ENCODE measurements at regions of chr10 and their contacts with region 1.

Region 1: DNA sequence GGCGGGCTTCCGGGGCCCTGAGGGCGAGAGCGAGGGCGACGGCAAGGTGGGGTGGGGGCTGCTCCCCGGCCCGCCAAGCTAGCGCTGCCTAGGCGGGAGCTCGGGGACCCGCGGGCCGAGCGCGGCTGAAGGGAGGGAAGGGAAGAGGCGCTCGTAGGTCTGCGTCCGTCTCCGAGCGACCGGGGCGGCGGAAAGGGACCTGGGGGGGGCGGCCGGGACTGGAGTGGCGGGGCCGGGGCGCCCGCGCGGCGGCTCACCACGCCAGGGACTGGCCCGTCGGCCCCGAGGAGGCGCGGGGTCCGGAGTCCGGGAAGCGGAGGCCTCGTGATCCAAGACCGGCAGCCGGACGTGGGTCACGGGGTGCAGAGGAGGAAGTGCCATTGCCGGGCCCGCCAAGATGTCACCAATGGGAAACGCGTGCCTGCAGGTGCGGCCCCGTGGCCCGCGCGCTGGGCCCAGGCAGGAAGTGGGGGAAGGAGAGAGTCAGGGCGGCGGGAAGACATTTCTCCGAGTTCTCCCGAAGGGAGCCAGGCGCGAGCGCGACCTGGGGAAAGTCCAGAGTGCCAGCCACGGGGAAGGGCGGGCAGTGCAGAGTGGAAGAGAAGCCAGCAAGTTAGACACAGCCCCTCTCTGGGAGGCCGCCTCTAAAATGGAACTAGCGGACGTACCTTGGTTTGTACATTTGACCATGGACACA is 11.9 kb downstream of the HNRNPF start:
- DNase-seq: peak in 2 of 4 experiments; percentile 91 to 95
- ATAC-seq: peak; percentile 74
- H3K4me3 ChIP-seq: peak overlapping the region; percentile 65
- H3K27ac ChIP-seq: peak overlapping the region; percentile 96
- H3K4me1 ChIP-seq: peaks cover 46 to 58% of the 10 kb centered on the region in 2 experiments
- H3K27me3 ChIP-seq: no peaks in the 10 kb centered on the region
- CTCF ChIP-seq: no peak
- EP300 ChIP-seq: 0 out of 2 replicates have a peak, but pooled peaks have one; percentile 13
- POLR2A ChIP-seq: peak; percentile 91
- RAD21 ChIP-seq: peak in 1 of 2 experiments; percentile 19; a peak in 3 of 4 replicates

Region 2: DNA sequence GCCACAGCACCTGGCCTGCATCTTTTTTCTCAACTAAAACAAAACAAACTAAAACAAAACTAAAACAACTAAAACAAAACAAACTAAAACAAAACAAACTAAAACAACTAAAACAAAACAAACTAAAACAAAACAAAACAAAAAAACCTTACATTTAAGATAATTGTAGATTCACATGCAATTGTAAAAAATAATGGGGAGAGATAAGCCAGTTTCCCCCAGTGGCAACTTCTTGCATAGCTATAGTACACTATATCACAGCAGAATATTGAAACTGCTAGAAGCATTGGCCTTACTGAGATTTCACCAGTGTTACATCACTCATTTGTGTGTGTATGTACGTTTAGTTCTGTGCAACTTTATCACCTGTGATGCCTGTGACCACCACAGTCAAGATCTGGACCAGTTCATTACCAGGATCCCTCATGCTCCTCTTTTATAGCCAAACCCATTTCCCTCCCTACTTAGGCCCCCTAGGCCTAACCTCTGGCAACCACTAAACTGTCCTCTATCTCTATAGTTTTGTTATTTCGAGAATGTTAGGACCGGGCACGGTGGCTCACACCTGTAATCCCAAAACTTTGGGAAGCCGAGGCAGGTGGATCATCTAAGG is 16.4 kb before region 1 on chr10:
- CTCF ChIA-PET with region 1: no interaction called
- POLR2A ChIA-PET with region 1: interaction called, 73 read pairs
- in situ Hi-C with region 1: no loop called
- intact Hi-C with region 1: no loop called
- DNase-seq: peak in 2 of 4 experiments; percentile 45 to 50
- ATAC-seq: peak; percentile 75
- H3K4me3 ChIP-seq: no peak overlapping the region
- H3K27ac ChIP-seq: no peak overlapping the region
- H3K4me1 ChIP-seq: peaks cover 13 to 16% of the 10 kb centered on the region in 2 experiments; a peak in 4 of 5 replicates
- H3K27me3 ChIP-seq: no peaks in the 10 kb centered on the region
- CTCF ChIP-seq: peak in 2 of 3 experiments; percentile 49 to 51; a peak in 3 of 6 replicates
- EP300 ChIP-seq: peak; percentile 89
- POLR2A ChIP-seq: no peak
- RAD21 ChIP-seq: peak; percentile 40 to 45; a peak in 3 of 4 replicates

Region 3: GRCh38 chr10:43407576-43408330 is 10.7 kb after region 1 on chr10:
- CTCF ChIA-PET with region 1: no interaction called
- POLR2A ChIA-PET with region 1: interaction called, 60 read pairs
- in situ Hi-C with region 1: no loop called
- intact Hi-C with region 1: loop called (anchors 1 kb)
- DNase-seq: peak; percentile 70 to 97 (median 82)
- ATAC-seq: peak; percentile 69
- H3K4me3 ChIP-seq: peak overlapping the region; percentile 82
- H3K27ac ChIP-seq: peak overlapping the region; percentile 91
- H3K4me1 ChIP-seq: peaks cover 22 to 50% of the 10 kb centered on the region in 2 experiments; a peak in 4 of 5 replicates
- H3K27me3 ChIP-seq: no peaks in the 10 kb centered on the region
- CTCF ChIP-seq: peak; percentile 49 to 69 (median 52)
- EP300 ChIP-seq: peak; percentile 73
- POLR2A ChIP-seq: peak; percentile 99
- RAD21 ChIP-seq: peak in 1 of 2 experiments; percentile 63; a peak in 3 of 4 replicates

Region 4: GRCh38 chr10:43417950-43418768 is 21.1 kb after region 1 on chr10:
- CTCF ChIA-PET with region 1: no interaction called
- POLR2A ChIA-PET with region 1: interaction called, 19 read pairs
- in situ Hi-C with region 1: no loop called
- intact Hi-C with region 1: loop called (anchors 1 kb)
- DNase-seq: peak; percentile 97 to 100 (median 98)
- ATAC-seq: peak; percentile 83
- H3K4me3 ChIP-seq: no peak overlapping the region
- H3K27ac ChIP-seq: peak overlapping the region; percentile 91
- H3K4me1 ChIP-seq: peaks cover 45 to 67% of the 10 kb centered on the region in 2 experiments
- H3K27me3 ChIP-seq: no peaks in the 10 kb centered on the region
- CTCF ChIP-seq: no peak
- EP300 ChIP-seq: peak; percentile 100
- POLR2A ChIP-seq: peak; percentile 66
- RAD21 ChIP-seq: no peak; a peak in 3 of 4 replicates

Region 5: DNA sequence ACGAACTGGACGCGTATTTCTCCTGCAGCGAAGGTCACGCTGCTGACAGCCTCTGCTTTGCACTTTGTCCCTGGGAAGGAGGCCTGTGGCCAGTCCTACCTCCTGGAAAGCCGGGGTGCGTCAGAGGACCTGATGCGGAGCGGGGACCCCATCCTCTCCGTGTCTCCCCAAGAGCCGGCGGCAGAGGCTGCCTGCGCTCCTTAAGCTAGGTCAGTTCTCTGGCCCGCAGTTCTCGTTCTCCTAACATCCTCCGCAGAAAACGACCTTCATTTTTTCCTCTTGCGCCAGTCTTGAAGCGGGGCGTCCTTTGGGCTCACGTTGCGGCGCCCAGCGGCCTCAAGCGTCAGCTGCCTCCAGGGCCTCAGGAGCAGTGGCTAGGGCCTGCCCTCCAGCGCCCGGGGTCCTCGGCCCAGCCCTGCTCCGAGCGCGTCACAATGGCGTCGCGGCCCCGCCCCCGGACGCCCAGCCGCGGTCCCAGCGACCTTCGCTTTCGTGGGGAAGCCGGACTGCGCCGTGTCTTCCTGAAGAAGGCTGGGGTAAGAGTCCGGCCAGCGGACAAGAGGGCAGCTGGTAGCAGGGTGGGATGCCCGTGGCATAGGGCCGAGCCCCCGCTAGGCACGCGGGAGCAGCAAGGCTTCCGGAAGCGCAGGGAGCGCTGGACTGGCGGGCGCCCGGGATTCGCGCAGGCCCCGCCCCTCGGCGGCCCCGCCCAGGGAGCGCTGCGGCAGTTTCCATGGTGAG is 39.5 kb after region 1 on chr10 and contains the start of gene ZNF487:
- CTCF ChIA-PET with region 1: no interaction called
- POLR2A ChIA-PET with region 1: interaction called, 8 read pairs
- in situ Hi-C with region 1: no loop called
- intact Hi-C with region 1: loop called (anchors 2 kb)
- DNase-seq: peak; percentile 95 to 96 (median 95)
- ATAC-seq: peak; percentile 98
- H3K4me3 ChIP-seq: peak within 1 kb of the TSS; percentile 54
- H3K27ac ChIP-seq: peak within 1 kb of the TSS; percentile 90
- H3K4me1 ChIP-seq: peaks cover 5 to 22% of the 10 kb centered on the region in 2 experiments; a peak in 3 of 5 replicates
- H3K27me3 ChIP-seq: no peaks in the 10 kb centered on the region
- CTCF ChIP-seq: peak; percentile 51 to 93 (median 76); a peak in 5 of 6 replicates
- EP300 ChIP-seq: no peak
- POLR2A ChIP-seq: peak; percentile 96
- RAD21 ChIP-seq: peak; percentile 86 to 87
- polyA plus RNA-seq, gene ZNF487: 6.1 to 6.5 TPM

Region 6: DNA sequence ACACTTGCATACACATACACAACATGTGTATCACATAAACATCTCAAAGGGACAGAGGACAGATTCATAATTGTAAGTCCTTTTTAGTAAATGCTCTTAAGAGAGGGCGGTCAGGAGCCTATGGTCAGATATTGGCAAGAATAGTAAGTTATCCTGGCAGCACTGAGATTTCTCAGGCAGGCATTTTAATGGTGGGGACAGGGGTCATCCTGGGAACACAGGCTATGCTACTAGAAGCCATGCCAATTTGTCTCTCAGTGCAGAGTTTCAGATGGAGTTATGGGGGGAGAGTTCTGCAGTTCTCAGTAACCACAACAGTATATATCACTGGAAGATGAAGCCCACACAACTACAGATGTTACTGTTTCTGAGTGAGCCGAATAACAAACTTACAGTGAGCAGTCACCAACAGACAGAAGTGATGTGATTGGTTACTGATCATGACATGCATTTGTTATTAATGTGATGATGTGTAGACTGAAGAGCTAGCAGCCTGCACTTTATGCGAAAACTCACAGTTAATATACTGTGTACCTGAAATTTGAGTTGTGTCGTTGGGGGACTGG is 56.3 kb after region 1 on chr10:
- CTCF ChIA-PET with region 1: no interaction called
- POLR2A ChIA-PET with region 1: interaction called, 7 read pairs
- in situ Hi-C with region 1: loop called (anchors 5 kb)
- intact Hi-C with region 1: no loop called
- DNase-seq: no peak
- ATAC-seq: no peak
- H3K4me3 ChIP-seq: no peak overlapping the region
- H3K27ac ChIP-seq: no peak overlapping the region
- H3K4me1 ChIP-seq: peaks cover 16 to 22% of the 10 kb centered on the region in 2 experiments; a peak in 4 of 5 replicates
- H3K27me3 ChIP-seq: no peaks in the 10 kb centered on the region
- CTCF ChIP-seq: no peak
- EP300 ChIP-seq: no peak
- POLR2A ChIP-seq: no peak
- RAD21 ChIP-seq: no peak

Region 7: DNA sequence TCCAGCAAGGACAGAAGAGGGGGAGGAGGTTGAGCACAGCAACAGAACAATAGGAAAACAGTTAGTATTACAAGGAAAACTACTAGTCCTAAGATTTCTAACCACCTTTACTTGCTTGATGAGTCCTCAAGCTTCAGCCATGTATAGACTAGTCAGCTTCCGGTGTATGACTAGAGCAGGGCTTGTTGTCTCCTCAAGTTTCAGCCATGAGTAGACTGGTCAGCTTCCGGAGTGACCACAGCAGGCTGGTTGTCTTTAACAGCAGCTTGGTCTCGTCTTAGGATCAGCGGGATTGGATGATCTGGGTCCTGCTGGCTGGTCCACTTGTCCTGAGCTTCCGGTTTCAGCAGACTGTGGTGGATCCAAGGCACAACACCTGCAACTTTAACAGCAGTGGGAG is 188.0 kb after region 1 on chr10:
- CTCF ChIA-PET with region 1: no interaction called
- POLR2A ChIA-PET with region 1: no interaction called
- in situ Hi-C with region 1: no loop called
- intact Hi-C with region 1: no loop called
- DNase-seq: no peak
- ATAC-seq: no peak; the same call in 2 of the 3 replicates
- H3K4me3 ChIP-seq: no peak overlapping the region
- H3K27ac ChIP-seq: no peak overlapping the region
- H3K4me1 ChIP-seq: no peaks in the 10 kb centered on the region
- H3K27me3 ChIP-seq: peaks cover 0 to 10% of the 10 kb centered on the region in 2 experiments; a peak in 2 of 5 replicates
- CTCF ChIP-seq: no peak
- EP300 ChIP-seq: no peak
- POLR2A ChIP-seq: no peak
- RAD21 ChIP-seq: no peak

Region 8: DNA sequence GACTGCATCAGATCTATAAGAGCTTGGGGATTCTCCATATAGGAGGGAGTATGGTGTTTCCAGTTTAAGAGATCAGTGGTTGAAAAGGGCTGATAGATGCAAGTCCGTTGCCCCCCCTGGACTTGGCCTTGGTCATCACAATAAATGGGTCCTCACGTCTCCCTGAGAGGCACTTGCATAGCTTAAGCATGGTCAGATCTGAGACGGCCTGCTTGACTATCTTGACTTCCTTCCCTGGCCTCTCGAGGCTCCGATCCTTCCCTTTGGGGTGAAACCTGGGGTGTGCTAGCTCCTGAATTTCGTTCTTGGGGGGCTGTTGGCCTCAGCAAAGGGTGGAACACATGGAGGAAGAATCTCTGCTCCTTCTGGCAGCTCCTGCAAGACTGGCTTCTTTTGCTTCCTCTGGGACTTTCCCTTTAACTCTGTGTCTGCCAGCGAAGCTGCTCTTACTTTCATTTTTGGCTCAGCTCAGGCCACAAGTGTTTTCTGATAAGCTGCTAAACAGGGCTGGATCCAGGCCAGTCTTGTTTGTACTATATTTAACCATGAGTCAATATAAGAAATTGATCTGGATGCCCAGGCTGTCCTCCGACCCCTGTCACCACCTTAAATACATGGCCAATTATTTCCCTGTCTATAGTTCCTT is 198.0 kb after region 1 on chr10:
- CTCF ChIA-PET with region 1: no interaction called
- POLR2A ChIA-PET with region 1: no interaction called
- in situ Hi-C with region 1: no loop called
- intact Hi-C with region 1: no loop called
- DNase-seq: peak in 1 of 4 experiments; percentile 62
- ATAC-seq: peak; percentile 77
- H3K4me3 ChIP-seq: peak overlapping the region; percentile 27
- H3K27ac ChIP-seq: peak overlapping the region; percentile 45; the same call in 1 of the 3 replicates
- H3K4me1 ChIP-seq: peaks cover 11 to 19% of the 10 kb centered on the region in 2 experiments
- H3K27me3 ChIP-seq: no peaks in the 10 kb centered on the region; a peak in 1 of 5 replicates
- CTCF ChIP-seq: no peak
- EP300 ChIP-seq: no peak
- POLR2A ChIP-seq: no peak
- RAD21 ChIP-seq: no peak

Measured in K562 (cell line).